ENCODE measurements at regions of chr7 and their contacts with region 1.

Region 1: GRCh38 chr7:149125863-149126661 is at the start of gene ZNF425:
- DNase-seq: peak; percentile 89 to 98 (median 95)
- ATAC-seq: peak; percentile 86
- H3K4me3 ChIP-seq: peak within 1 kb of the TSS; percentile 99
- H3K4me3 Mint-ChIP-seq: peak within 1 kb of the TSS; percentile 100
- H3K27ac ChIP-seq: peak within 1 kb of the TSS; percentile 86 to 88
- H3K27ac Mint-ChIP-seq: peak within 1 kb of the TSS; percentile 98
- H3K4me1 ChIP-seq: peaks cover 18% of the 10 kb centered on the region
- H3K4me1 Mint-ChIP-seq: peaks cover 28% of the 10 kb centered on the region
- H3K27me3 ChIP-seq: no peaks in the 10 kb centered on the region
- H3K27me3 Mint-ChIP-seq: no peaks in the 10 kb centered on the region
- CTCF ChIP-seq: peak; percentile 83
- total RNA-seq, gene ZNF425: 0.52 to 0.56 TPM

Region 2: GRCh38 chr7:148121426-148121825 is 1004.6 kb before region 1 on chr7:
- CTCF ChIA-PET with region 1: no interaction called
- POLR2A ChIA-PET with region 1: no interaction called
- intact Hi-C with region 1: no loop called
- DNase-seq: no peak
- ATAC-seq: no peak
- H3K4me3 ChIP-seq: no peak overlapping the region
- H3K4me3 Mint-ChIP-seq: no peak overlapping the region
- H3K27ac ChIP-seq: no peak overlapping the region
- H3K27ac Mint-ChIP-seq: no peak overlapping the region
- H3K4me1 ChIP-seq: no peaks in the 10 kb centered on the region
- H3K4me1 Mint-ChIP-seq: no peaks in the 10 kb centered on the region
- H3K27me3 ChIP-seq: no peaks in the 10 kb centered on the region
- H3K27me3 Mint-ChIP-seq: peaks cover 2% of the 10 kb centered on the region
- CTCF ChIP-seq: no peak

Region 3: GRCh38 chr7:149005241-149006050 is 120.6 kb before region 1 on chr7:
- CTCF ChIA-PET with region 1: interaction called, 4 read pairs
- POLR2A ChIA-PET with region 1: no interaction called
- intact Hi-C with region 1: loop called in 1 of 2 experiments (anchors 1 kb)
- DNase-seq: peak; percentile 61 to 91 (median 87)
- ATAC-seq: peak; percentile 92
- H3K4me3 ChIP-seq: no peak overlapping the region
- H3K4me3 Mint-ChIP-seq: no peak overlapping the region
- H3K27ac ChIP-seq: no peak overlapping the region
- H3K27ac Mint-ChIP-seq: no peak overlapping the region
- H3K4me1 ChIP-seq: peaks cover 4% of the 10 kb centered on the region
- H3K4me1 Mint-ChIP-seq: peaks cover 4% of the 10 kb centered on the region
- H3K27me3 ChIP-seq: no peaks in the 10 kb centered on the region
- H3K27me3 Mint-ChIP-seq: no peaks in the 10 kb centered on the region
- CTCF ChIP-seq: peak; percentile 75

Region 4: DNA sequence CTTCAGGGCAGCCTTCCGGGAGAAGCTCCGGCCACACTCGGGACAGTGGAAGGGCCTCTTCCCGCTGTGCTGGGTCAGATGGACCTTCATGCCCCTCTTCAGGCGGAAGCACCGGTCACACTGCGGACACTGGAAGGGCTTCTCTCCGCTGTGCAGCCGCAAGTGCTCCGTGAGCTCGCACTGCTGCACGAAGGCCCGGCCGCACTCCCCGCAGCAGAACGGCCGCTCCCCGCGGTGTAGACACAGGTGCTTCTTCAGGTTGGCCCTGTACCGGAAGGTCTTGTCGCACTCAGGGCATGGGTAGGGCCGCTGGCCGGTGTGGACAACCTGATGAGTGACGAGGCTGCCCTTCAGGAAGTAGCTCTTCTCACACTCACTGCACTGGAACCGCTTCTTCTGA is 21.3 kb before region 1 on chr7:
- CTCF ChIA-PET with region 1: no interaction called
- POLR2A ChIA-PET with region 1: no interaction called
- intact Hi-C with region 1: no loop called
- DNase-seq: no peak
- ATAC-seq: no peak
- H3K4me3 ChIP-seq: no peak overlapping the region
- H3K4me3 Mint-ChIP-seq: no peak overlapping the region
- H3K27ac ChIP-seq: no peak overlapping the region
- H3K27ac Mint-ChIP-seq: no peak overlapping the region
- H3K4me1 ChIP-seq: no peaks in the 10 kb centered on the region
- H3K4me1 Mint-ChIP-seq: no peaks in the 10 kb centered on the region
- H3K27me3 ChIP-seq: no peaks in the 10 kb centered on the region
- H3K27me3 Mint-ChIP-seq: no peaks in the 10 kb centered on the region
- CTCF ChIP-seq: no peak

Region 5: DNA sequence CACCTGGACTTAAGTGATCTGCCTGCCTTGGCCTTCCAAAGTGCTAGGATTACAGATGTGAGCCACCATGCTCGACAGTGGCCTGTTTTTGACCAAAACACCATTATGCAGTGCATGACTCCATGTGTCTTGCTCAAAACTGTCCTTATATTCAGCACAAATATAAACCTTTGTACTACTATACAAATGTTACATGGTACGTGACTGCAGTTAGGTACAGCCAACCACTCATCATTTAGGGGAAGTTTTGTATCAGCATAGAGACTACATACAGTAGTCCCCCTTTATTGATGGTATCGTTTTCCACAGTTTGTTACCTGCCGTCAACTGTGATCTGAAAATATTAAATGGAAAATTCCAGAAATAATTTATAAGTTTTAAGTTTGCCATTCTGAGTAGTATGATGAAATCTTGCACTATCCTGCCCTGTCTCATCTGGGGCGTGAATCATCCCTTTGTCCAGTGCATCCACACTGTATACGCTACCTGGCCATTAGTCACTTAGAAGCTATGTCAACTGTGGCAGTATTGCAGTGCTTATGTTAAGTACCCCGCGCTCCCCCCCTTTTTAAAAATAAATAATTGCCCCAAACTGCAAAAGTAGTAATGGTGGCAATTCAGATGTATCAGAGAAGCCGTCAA is 46.0 kb after region 1 on chr7:
- CTCF ChIA-PET with region 1: no interaction called
- POLR2A ChIA-PET with region 1: no interaction called
- intact Hi-C with region 1: no loop called
- DNase-seq: no peak
- ATAC-seq: no peak
- H3K4me3 ChIP-seq: no peak overlapping the region
- H3K4me3 Mint-ChIP-seq: no peak overlapping the region
- H3K27ac ChIP-seq: no peak overlapping the region
- H3K27ac Mint-ChIP-seq: no peak overlapping the region
- H3K4me1 ChIP-seq: no peaks in the 10 kb centered on the region
- H3K4me1 Mint-ChIP-seq: no peaks in the 10 kb centered on the region
- H3K27me3 ChIP-seq: no peaks in the 10 kb centered on the region
- H3K27me3 Mint-ChIP-seq: no peaks in the 10 kb centered on the region
- CTCF ChIP-seq: no peak

Region 6: GRCh38 chr7:149195180-149196150 is 69.4 kb after region 1 on chr7 and contains the start of gene ZNF282:
- CTCF ChIA-PET with region 1: no interaction called
- POLR2A ChIA-PET with region 1: interaction called, 7 read pairs
- intact Hi-C with region 1: loop called in 1 of 2 experiments (anchors 2 kb)
- DNase-seq: peak; percentile 31 to 80 (median 65)
- ATAC-seq: peak; percentile 78
- H3K4me3 ChIP-seq: peak within 1 kb of the TSS; percentile 83 to 84
- H3K4me3 Mint-ChIP-seq: peak within 1 kb of the TSS; percentile 86
- H3K27ac ChIP-seq: peak within 1 kb of the TSS; percentile 60 to 68
- H3K27ac Mint-ChIP-seq: peak within 1 kb of the TSS; percentile 84
- H3K4me1 ChIP-seq: peaks cover 17% of the 10 kb centered on the region
- H3K4me1 Mint-ChIP-seq: peaks cover 43% of the 10 kb centered on the region
- H3K27me3 ChIP-seq: no peaks in the 10 kb centered on the region
- H3K27me3 Mint-ChIP-seq: no peaks in the 10 kb centered on the region
- CTCF ChIP-seq: no peak
- total RNA-seq, gene ZNF282: 12.5 to 14.9 TPM

Region 7: DNA sequence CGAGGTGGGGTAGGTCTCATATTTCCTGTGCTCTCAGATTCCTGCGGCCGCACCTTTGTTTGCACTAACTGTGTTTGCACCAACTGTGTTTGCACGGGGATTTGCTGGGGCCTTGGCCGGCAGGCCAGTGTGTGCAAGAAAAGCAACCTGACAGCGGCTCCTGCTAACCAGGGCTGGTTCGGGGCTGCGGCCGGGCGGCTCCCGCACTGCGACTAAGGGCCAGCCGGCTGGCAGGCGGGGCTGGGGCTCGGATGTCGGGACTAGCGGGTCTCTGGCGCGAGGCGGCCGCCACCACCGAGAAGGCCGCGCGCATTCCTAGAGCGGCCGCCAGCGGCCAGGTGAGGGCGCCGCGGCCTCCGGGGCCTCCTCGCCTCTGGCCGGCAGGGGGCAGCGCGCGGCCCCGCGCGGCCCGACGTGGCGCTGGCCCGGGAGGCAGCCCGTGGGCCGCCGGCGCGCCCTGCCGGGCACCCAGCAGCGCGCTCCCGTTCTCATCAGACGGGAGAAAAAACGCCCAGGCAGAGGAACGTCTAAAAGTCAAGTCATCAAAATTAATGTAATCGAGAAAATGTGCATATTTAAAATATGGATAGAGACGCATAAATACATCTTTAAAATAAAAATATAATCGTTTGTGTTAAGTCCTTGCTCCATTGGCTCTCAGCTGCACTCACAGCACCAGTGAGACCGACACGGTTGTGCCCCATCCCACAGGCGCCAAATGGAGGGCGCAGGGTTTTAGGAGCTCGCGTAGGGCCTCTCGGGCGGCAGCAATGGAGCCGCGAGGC is 296.3 kb after region 1 on chr7:
- CTCF ChIA-PET with region 1: interaction called, 3 read pairs
- POLR2A ChIA-PET with region 1: no interaction called
- intact Hi-C with region 1: loop called in 1 of 2 experiments (anchors 10 kb)
- DNase-seq: peak; percentile 50 to 91 (median 66)
- ATAC-seq: peak; percentile 97
- H3K4me3 ChIP-seq: peak overlapping the region; percentile 71 to 76
- H3K4me3 Mint-ChIP-seq: peak overlapping the region; percentile 76
- H3K27ac ChIP-seq: peak overlapping the region; percentile 60 to 82
- H3K27ac Mint-ChIP-seq: peak overlapping the region; percentile 75
- H3K4me1 ChIP-seq: peaks cover 5% of the 10 kb centered on the region
- H3K4me1 Mint-ChIP-seq: peaks cover 12% of the 10 kb centered on the region
- H3K27me3 ChIP-seq: no peaks in the 10 kb centered on the region
- H3K27me3 Mint-ChIP-seq: no peaks in the 10 kb centered on the region
- CTCF ChIP-seq: no peak

Region 8: GRCh38 chr7:149624419-149625339 is 498.6 kb after region 1 on chr7:
- CTCF ChIA-PET with region 1: no interaction called
- POLR2A ChIA-PET with region 1: no interaction called
- intact Hi-C with region 1: loop called in 1 of 2 experiments (anchors 10 kb)
- DNase-seq: peak; percentile 84 to 96 (median 90)
- ATAC-seq: peak; percentile 84
- H3K4me3 ChIP-seq: peak overlapping the region; percentile 68 to 86
- H3K4me3 Mint-ChIP-seq: peak overlapping the region; percentile 93
- H3K27ac ChIP-seq: peak overlapping the region; percentile 46 to 68
- H3K27ac Mint-ChIP-seq: peak overlapping the region; percentile 93
- H3K4me1 ChIP-seq: peaks cover 27% of the 10 kb centered on the region
- H3K4me1 Mint-ChIP-seq: peaks cover 41% of the 10 kb centered on the region
- H3K27me3 ChIP-seq: no peaks in the 10 kb centered on the region
- H3K27me3 Mint-ChIP-seq: peaks cover 3% of the 10 kb centered on the region
- CTCF ChIP-seq: peak; percentile 99